MCF 10A (cell line): ENCODE measurements at regions of chr10 and their contacts with region 1.

Region 1: GRCh38 chr10:58435297-58435985 is 50.2 kb downstream of the TFAM start:
- DNase-seq: peak; percentile 97
- H3K4me3 Mint-ChIP-seq: peak overlapping the region; percentile 45
- H3K27ac Mint-ChIP-seq: peak overlapping the region; percentile 99
- H3K4me1 Mint-ChIP-seq: peaks cover 64% of the 10 kb centered on the region
- H3K27me3 Mint-ChIP-seq: no peaks in the 10 kb centered on the region
- CTCF ChIP-seq: no peak

Region 2: DNA sequence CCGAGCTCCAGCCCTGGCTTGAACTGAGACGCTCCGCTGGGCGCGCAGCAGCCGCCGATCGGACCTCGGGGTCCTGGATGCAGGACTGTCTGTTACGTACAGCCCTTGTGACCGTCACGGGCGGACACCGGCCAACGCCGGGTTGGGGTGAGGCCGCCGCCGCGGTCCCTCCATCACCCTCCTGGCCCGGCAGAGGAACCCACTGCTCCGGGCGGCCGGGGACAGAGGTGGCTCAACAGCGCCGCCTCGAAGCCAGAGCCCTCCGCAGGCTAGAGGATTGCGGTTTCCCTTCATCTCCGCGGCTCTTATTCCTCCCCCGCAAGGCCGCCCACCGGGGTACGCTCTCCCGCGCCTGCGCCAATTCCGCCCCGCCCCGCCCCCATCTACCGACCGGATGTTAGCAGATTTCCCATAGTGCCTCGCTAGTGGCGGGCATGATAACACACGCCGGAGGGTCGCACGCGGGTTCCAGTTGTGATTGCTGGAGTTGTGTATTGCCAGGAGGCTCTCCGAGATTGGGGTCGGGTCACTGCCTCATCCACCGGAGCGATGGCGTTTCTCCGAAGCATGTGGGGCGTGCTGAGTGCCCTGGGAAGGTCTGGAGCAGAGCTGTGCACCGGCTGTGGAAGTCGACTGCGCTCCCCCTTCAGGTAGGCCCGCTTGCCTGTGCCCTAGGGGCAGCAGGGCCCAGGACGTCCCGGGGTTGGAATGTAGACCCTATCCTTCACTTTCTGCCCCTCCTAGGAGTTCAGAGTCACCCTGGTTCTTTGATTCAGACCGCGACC is 50.2 kb before region 1 on chr10 and contains the start of gene TFAM:
- CTCF ChIA-PET with region 1: no interaction called
- POLR2A ChIA-PET with region 1: interaction called, 14 read pairs
- intact Hi-C with region 1: no loop called
- DNase-seq: peak; percentile 93
- H3K4me3 Mint-ChIP-seq: peak within 1 kb of the TSS; percentile 86
- H3K27ac Mint-ChIP-seq: peak within 1 kb of the TSS; percentile 86
- H3K4me1 Mint-ChIP-seq: peaks cover 9% of the 10 kb centered on the region
- H3K27me3 Mint-ChIP-seq: no peaks in the 10 kb centered on the region
- CTCF ChIP-seq: peak; percentile 37
- total RNA-seq, gene TFAM: 44.4 and 62.3 TPM in 2 replicates

Region 3: GRCh38 chr10:58404001-58404400 is 31.4 kb before region 1 on chr10:
- CTCF ChIA-PET with region 1: no interaction called
- POLR2A ChIA-PET with region 1: no interaction called
- intact Hi-C with region 1: no loop called
- DNase-seq: no peak
- H3K4me3 Mint-ChIP-seq: no peak overlapping the region
- H3K27ac Mint-ChIP-seq: no peak overlapping the region
- H3K4me1 Mint-ChIP-seq: no peaks in the 10 kb centered on the region
- H3K27me3 Mint-ChIP-seq: no peaks in the 10 kb centered on the region
- CTCF ChIP-seq: no peak

Region 4: DNA sequence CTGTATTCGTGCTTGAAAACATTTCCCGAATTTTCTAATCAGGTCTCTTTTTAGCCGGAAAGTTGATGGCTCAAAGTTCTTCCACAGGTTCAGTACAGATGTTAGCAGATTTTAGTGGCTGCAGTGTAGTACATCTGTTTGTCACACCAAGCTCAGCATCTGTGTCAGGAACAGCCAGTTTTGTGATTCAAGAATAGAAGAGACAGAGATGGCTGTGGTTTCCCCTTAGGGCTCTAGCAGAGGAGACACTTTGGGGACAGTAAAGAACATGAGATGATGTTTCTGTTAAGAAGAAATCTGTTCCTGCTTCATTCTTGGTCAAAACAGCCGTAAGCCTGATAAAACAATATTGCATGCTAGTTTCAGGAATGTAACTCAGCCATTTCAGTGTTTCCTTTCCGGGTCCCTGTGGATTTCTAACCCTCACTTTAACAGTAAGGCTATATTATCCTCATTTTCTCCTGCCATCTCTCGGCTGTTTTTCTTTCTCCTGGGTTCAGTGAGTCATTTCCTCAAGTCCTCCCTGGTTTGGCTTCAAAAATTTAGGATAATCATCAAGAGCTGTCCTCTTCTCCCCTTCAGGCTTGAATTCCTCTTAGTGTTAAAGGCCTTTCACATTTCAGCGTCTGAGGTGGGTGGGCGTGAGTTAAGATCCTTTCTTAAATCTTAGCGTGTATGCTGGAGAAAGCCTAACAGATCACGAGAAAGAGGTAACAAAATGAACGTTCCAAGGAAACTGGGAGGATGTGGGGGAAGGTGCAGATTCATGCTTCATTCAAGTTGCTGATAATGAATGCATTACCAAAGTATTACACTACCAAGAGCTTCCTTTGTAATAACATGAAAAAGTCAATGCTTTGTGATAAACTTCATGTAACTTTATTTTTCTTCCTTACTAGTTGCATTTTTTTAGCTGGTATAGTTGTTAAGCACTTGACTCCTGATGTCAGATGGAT is 40.2 kb after region 1 on chr10:
- CTCF ChIA-PET with region 1: interaction called, 5 read pairs
- POLR2A ChIA-PET with region 1: interaction called, 14 read pairs
- intact Hi-C with region 1: no loop called
- DNase-seq: peak; percentile 59
- H3K4me3 Mint-ChIP-seq: peak overlapping the region; percentile 49
- H3K27ac Mint-ChIP-seq: peak overlapping the region; percentile 94
- H3K4me1 Mint-ChIP-seq: peaks cover 21% of the 10 kb centered on the region
- H3K27me3 Mint-ChIP-seq: no peaks in the 10 kb centered on the region
- CTCF ChIP-seq: no peak

Region 5: GRCh38 chr10:58513188-58514110 is 78.0 kb after region 1 on chr10:
- CTCF ChIA-PET with region 1: interaction called, 6 read pairs
- POLR2A ChIA-PET with region 1: interaction called, 62 read pairs
- intact Hi-C with region 1: loop called (anchors 1 kb)
- DNase-seq: peak; percentile 73
- H3K4me3 Mint-ChIP-seq: peak overlapping the region; percentile 74
- H3K27ac Mint-ChIP-seq: peak overlapping the region; percentile 89
- H3K4me1 Mint-ChIP-seq: peaks cover 27% of the 10 kb centered on the region
- H3K27me3 Mint-ChIP-seq: no peaks in the 10 kb centered on the region
- CTCF ChIP-seq: no peak